ENCODE measurements at regions of chr11 and their contacts with region 1.

Region 1: DNA sequence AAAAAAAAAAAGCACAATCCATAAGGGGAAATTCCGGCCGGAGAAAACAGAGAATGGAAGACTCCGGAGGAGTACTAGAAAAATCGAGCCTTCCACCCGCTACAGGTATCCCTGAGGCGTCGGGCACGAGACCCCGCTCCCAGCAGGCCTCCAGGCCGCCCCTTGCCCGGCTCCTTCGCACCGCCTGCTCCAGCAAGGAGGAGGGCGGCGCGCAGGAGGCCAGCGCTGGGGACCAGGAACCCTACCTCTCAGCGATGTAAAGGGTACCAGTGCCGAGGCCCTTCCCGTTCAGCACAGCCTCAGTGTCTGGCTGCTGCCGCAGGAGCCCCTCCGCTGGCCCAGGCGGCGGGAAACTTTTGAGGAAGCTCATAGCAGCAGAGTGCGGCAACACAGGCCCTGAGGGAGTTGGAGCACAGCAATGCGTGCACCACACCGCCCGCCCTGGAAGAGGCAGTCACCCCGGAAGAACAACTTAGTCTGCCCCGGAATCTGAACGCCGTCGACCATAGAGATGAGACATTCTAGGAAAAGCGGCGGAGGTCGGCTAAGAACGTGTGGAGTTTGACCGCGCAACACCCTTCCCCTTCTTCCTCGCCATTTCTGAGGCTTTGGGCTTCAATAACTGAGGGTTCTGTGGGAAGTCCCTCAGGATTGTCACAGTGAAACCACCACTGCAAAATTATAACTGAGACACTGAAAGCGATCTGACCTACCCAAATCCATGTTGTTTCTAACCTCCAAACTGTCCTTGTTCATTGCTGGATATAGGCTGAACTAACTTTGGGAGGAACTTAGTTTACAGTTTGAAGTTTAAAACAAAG is at the start of gene CLNS1A:
- DNase-seq: peak; percentile 77 to 79
- ATAC-seq: peak; percentile 97 to 99
- H3K4me3 ChIP-seq: peak within 1 kb of the TSS; percentile 90 to 98 (median 93)
- H3K27ac ChIP-seq: peak within 1 kb of the TSS; percentile 71 to 86 (median 82)
- H3K4me1 ChIP-seq: peaks cover 11 to 17% of the 10 kb centered on the region in 2 donors
- H3K27me3 ChIP-seq: peaks cover 0 to 4% (median 0%) of the 10 kb centered on the region in 3 donors
- CTCF ChIP-seq: no peak
- POLR2A ChIP-seq: peak; percentile 47 to 59
- total RNA-seq, gene CLNS1A: 47.0 to 92.0 (median 81.3) TPM

Region 2: GRCh38 chr11:76946245-76946644 is 691.3 kb before region 1 on chr11:
- in situ Hi-C with region 1: no loop called
- intact Hi-C with region 1: no loop called
- DNase-seq: no peak
- ATAC-seq: no peak
- H3K4me3 ChIP-seq: no peak overlapping the region
- H3K27ac ChIP-seq: no peak overlapping the region
- H3K4me1 ChIP-seq: no peaks in the 10 kb centered on the region
- H3K27me3 ChIP-seq: no peaks in the 10 kb centered on the region
- CTCF ChIP-seq: no peak
- POLR2A ChIP-seq: no peak

Region 3: GRCh38 chr11:77695417-77695816 is 57.9 kb after region 1 on chr11:
- in situ Hi-C with region 1: no loop called
- intact Hi-C with region 1: no loop called
- DNase-seq: no peak
- ATAC-seq: peak; percentile 68 to 69
- H3K4me3 ChIP-seq: no peak overlapping the region
- H3K27ac ChIP-seq: peak overlapping the region; percentile 36 to 60 (median 42)
- H3K4me1 ChIP-seq: peaks cover 0 to 4% of the 10 kb centered on the region in 2 donors
- H3K27me3 ChIP-seq: no peaks in the 10 kb centered on the region
- CTCF ChIP-seq: no peak
- POLR2A ChIP-seq: no peak

Region 4: GRCh38 chr11:77820563-77821348 is 183.2 kb after region 1 on chr11 and contains the starts of genes AAMDC and RSF1:
- in situ Hi-C with region 1: no loop called
- intact Hi-C with region 1: loop called (anchors 2 kb)
- DNase-seq: peak; percentile 98 to 99
- ATAC-seq: peak; percentile 84
- H3K4me3 ChIP-seq: peak within 1 kb of the TSS; percentile 92 to 97 (median 96)
- H3K27ac ChIP-seq: peak within 1 kb of the TSS; percentile 98 to 99 (median 99)
- H3K4me1 ChIP-seq: peaks cover 51 to 53% of the 10 kb centered on the region in 2 donors
- H3K27me3 ChIP-seq: no peaks in the 10 kb centered on the region
- CTCF ChIP-seq: peak; percentile 25 to 71 (median 58)
- POLR2A ChIP-seq: peak; percentile 82 to 96
- total RNA-seq, gene AAMDC: 32.4 to 70.3 (median 48.3) TPM
- total RNA-seq, gene RSF1: 17.9 to 48.4 (median 45.7) TPM

Measured in gastrocnemius medialis (tissue), 4 donors.